CD8-positive, alpha-beta memory T cell (primary cell): ENCODE measurements at regions of chr9 and their contacts with region 1.

Region 1: DNA sequence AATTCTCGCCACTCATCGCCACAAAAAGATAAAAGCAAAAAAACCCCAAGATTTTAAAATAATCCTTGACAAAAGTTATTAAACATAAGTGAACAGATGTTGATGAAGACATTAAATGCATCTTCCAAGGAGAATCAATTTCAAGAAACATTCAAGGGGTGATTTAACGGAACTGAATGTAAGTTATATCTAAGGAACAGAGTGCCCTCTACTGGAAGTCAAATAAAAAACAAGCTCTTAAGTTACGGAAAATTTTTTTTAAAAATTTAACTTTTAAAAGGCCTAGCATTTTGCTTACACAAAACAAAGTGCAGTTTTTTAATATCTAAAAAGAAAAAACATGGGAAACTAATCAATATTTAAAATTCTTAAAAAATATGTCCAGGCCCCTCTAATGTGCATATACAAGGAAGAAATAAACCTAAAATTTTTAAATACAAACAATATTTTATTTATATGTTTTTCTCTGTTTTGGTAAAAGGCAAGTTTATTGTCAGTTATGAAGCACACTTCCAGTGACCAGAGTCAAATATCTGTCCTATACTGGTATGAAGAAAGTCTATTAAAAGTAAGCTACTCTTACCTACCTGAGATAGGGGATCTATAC is 28.0 kb downstream of the TEX10 start:
- DNase-seq: peak in 2 of 5 donors; percentile 6 to 17
- H3K4me3 ChIP-seq: no peak overlapping the region
- H3K4me3 Mint-ChIP-seq: no peak overlapping the region
- H3K27ac ChIP-seq: no peak overlapping the region
- H3K27ac Mint-ChIP-seq: peak overlapping the region in 2 of 8 donors; percentile 15 to 63
- H3K4me1 ChIP-seq: no peaks in the 10 kb centered on the region
- H3K4me1 Mint-ChIP-seq: peaks cover 5 to 19% (median 17%) of the 10 kb centered on the region in 3 donors
- H3K27me3 ChIP-seq: no peaks in the 10 kb centered on the region
- H3K27me3 Mint-ChIP-seq: no peaks in the 10 kb centered on the region

Region 2: GRCh38 chr9:100309992-100310391 is 14.7 kb before region 1 on chr9:
- CTCF ChIA-PET with region 1: no interaction called
- POLR2A ChIA-PET with region 1: no interaction called
- DNase-seq: no peak
- H3K4me3 ChIP-seq: no peak overlapping the region
- H3K4me3 Mint-ChIP-seq: no peak overlapping the region
- H3K27ac ChIP-seq: no peak overlapping the region
- H3K27ac Mint-ChIP-seq: peak overlapping the region in 2 of 8 donors; percentile 25 to 37
- H3K4me1 ChIP-seq: no peaks in the 10 kb centered on the region
- H3K4me1 Mint-ChIP-seq: peaks cover 23 to 56% (median 35%) of the 10 kb centered on the region in 3 donors
- H3K27me3 ChIP-seq: no peaks in the 10 kb centered on the region
- H3K27me3 Mint-ChIP-seq: no peaks in the 10 kb centered on the region

Region 3: GRCh38 chr9:100352727-100353505 is 28.2 kb after region 1 on chr9 and contains the start of gene TEX10:
- CTCF ChIA-PET with region 1: interaction called, 13 read pairs
- POLR2A ChIA-PET with region 1: no interaction called
- DNase-seq: peak; percentile 78 to 91 (median 84)
- H3K4me3 ChIP-seq: peak within 1 kb of the TSS; percentile 80
- H3K4me3 Mint-ChIP-seq: peak within 1 kb of the TSS; percentile 89 to 97 (median 95)
- H3K27ac ChIP-seq: peak within 1 kb of the TSS; percentile 68
- H3K27ac Mint-ChIP-seq: peak within 1 kb of the TSS; percentile 75 to 94 (median 88)
- H3K4me1 ChIP-seq: peaks cover 34% of the 10 kb centered on the region
- H3K4me1 Mint-ChIP-seq: peaks cover 45 to 63% (median 60%) of the 10 kb centered on the region in 3 donors
- H3K27me3 ChIP-seq: no peaks in the 10 kb centered on the region
- H3K27me3 Mint-ChIP-seq: no peaks in the 10 kb centered on the region
- total RNA-seq, gene TEX10: 31.3 to 34.1 TPM

Region 4: GRCh38 chr9:100366121-100366520 is 41.4 kb after region 1 on chr9:
- CTCF ChIA-PET with region 1: no interaction called
- POLR2A ChIA-PET with region 1: no interaction called
- DNase-seq: no peak
- H3K4me3 ChIP-seq: no peak overlapping the region
- H3K4me3 Mint-ChIP-seq: no peak overlapping the region
- H3K27ac ChIP-seq: no peak overlapping the region
- H3K27ac Mint-ChIP-seq: no peak overlapping the region
- H3K4me1 ChIP-seq: no peaks in the 10 kb centered on the region
- H3K4me1 Mint-ChIP-seq: no peaks in the 10 kb centered on the region
- H3K27me3 ChIP-seq: no peaks in the 10 kb centered on the region
- H3K27me3 Mint-ChIP-seq: peaks cover 3 to 14% of the 10 kb centered on the region in 2 donors

Region 5: GRCh38 chr9:100525563-100525962 is 200.9 kb after region 1 on chr9:
- CTCF ChIA-PET with region 1: no interaction called
- POLR2A ChIA-PET with region 1: no interaction called
- DNase-seq: no peak
- H3K4me3 ChIP-seq: no peak overlapping the region
- H3K4me3 Mint-ChIP-seq: no peak overlapping the region
- H3K27ac ChIP-seq: no peak overlapping the region
- H3K27ac Mint-ChIP-seq: no peak overlapping the region
- H3K4me1 ChIP-seq: no peaks in the 10 kb centered on the region
- H3K4me1 Mint-ChIP-seq: no peaks in the 10 kb centered on the region
- H3K27me3 ChIP-seq: no peaks in the 10 kb centered on the region
- H3K27me3 Mint-ChIP-seq: no peaks in the 10 kb centered on the region